CD8-positive, alpha-beta memory T cell (primary cell): ENCODE measurements at regions of chr3 and their contacts with region 1.

Region 1: GRCh38 chr3:187738331-187739093 is 6.8 kb downstream of the BCL6 start:
- DNase-seq: peak; percentile 46 to 77 (median 65)
- H3K4me3 ChIP-seq: peak overlapping the region; percentile 81
- H3K4me3 Mint-ChIP-seq: peak overlapping the region; percentile 91 to 99 (median 98)
- H3K27ac ChIP-seq: peak overlapping the region; percentile 68
- H3K27ac Mint-ChIP-seq: peak overlapping the region; percentile 82 to 100 (median 99)
- H3K4me1 ChIP-seq: peaks cover 30% of the 10 kb centered on the region
- H3K4me1 Mint-ChIP-seq: peaks cover 43 to 59% (median 56%) of the 10 kb centered on the region in 3 donors
- H3K27me3 ChIP-seq: no peaks in the 10 kb centered on the region
- H3K27me3 Mint-ChIP-seq: peaks cover 0 to 9% of the 10 kb centered on the region in 2 donors

Region 2: GRCh38 chr3:187714404-187714979 is 24.0 kb before region 1 on chr3:
- CTCF ChIA-PET with region 1: interaction called, 16 read pairs
- POLR2A ChIA-PET with region 1: no interaction called
- DNase-seq: peak; percentile 47 to 79 (median 61)
- H3K4me3 ChIP-seq: no peak overlapping the region
- H3K4me3 Mint-ChIP-seq: peak overlapping the region in 1 of 7 donors; percentile 57
- H3K27ac ChIP-seq: no peak overlapping the region
- H3K27ac Mint-ChIP-seq: peak overlapping the region in 5 of 8 donors; percentile 2 to 72 (median 10)
- H3K4me1 ChIP-seq: peaks cover 6% of the 10 kb centered on the region
- H3K4me1 Mint-ChIP-seq: peaks cover 13 to 17% (median 17%) of the 10 kb centered on the region in 3 donors
- H3K27me3 ChIP-seq: no peaks in the 10 kb centered on the region
- H3K27me3 Mint-ChIP-seq: no peaks in the 10 kb centered on the region

Region 3: DNA sequence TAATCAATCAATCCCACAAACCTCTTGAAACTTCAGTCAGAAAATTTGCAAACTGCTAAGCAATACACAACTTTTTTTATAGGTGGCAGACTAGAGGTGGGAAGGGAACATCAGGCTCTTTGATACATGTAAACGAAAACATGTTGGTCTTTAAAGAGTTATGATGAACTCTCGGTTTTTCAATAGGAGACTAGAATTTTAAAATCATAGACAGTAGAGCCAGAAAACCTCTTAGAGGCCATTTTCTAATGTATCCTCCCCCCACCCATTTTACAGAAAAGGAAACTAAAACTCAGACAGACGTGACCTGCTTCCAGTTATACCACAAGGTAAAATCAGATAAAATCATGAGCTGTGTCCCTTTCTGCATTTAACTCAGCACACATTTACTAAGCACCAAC is 236.4 kb after region 1 on chr3:
- CTCF ChIA-PET with region 1: interaction called, 39 read pairs
- POLR2A ChIA-PET with region 1: no interaction called
- DNase-seq: peak in 2 of 5 donors; percentile 20 to 46
- H3K4me3 ChIP-seq: peak overlapping the region; percentile 29
- H3K4me3 Mint-ChIP-seq: peak overlapping the region; percentile 40 to 78 (median 65)
- H3K27ac ChIP-seq: no peak overlapping the region
- H3K27ac Mint-ChIP-seq: peak overlapping the region; percentile 75 to 95 (median 92)
- H3K4me1 ChIP-seq: peaks cover 46% of the 10 kb centered on the region
- H3K4me1 Mint-ChIP-seq: peaks cover 53 to 56% (median 54%) of the 10 kb centered on the region in 3 donors
- H3K27me3 ChIP-seq: no peaks in the 10 kb centered on the region
- H3K27me3 Mint-ChIP-seq: no peaks in the 10 kb centered on the region

Region 4: GRCh38 chr3:188749010-188749617 is 1010.6 kb after region 1 on chr3:
- CTCF ChIA-PET with region 1: interaction called, 178 read pairs
- POLR2A ChIA-PET with region 1: interaction called, 9 read pairs
- DNase-seq: peak; percentile 35 to 64 (median 45)
- H3K4me3 ChIP-seq: no peak overlapping the region
- H3K4me3 Mint-ChIP-seq: no peak overlapping the region
- H3K27ac ChIP-seq: no peak overlapping the region
- H3K27ac Mint-ChIP-seq: no peak overlapping the region
- H3K4me1 ChIP-seq: no peaks in the 10 kb centered on the region
- H3K4me1 Mint-ChIP-seq: peaks cover 0 to 13% (median 3%) of the 10 kb centered on the region in 3 donors
- H3K27me3 ChIP-seq: no peaks in the 10 kb centered on the region
- H3K27me3 Mint-ChIP-seq: no peaks in the 10 kb centered on the region

Region 5: DNA sequence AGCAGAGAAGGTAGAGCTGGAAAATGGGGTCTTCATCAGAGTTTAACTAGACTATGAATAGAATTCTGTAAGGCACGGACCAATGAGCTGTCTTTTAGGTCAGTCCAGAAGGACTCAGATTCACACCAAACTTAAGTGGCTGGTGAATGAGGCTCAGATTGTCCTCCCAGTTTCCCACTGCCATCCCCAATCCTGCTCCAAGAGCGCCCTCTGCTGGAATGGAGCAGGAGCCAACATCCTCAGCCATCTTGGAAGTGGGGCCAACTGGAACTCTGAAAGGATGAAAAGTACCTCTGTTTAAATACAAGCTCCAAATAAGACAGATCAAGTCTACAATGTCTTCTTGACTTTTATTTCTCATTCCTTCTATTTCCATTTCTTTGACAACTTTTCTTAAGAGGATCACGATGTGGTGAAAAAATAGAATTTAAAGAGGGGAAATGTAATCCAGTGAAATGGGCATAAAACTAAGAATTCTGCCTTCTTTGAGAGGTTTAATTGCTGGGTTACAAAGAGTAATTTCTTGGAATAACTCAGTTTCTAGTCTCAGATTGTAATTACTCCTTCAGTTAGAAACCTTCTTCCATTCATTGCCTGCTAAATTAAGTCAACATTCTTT is 1216.2 kb after region 1 on chr3:
- CTCF ChIA-PET with region 1: interaction called, 298 read pairs
- POLR2A ChIA-PET with region 1: interaction called, 41 read pairs
- DNase-seq: peak; percentile 54 to 77 (median 56)
- H3K4me3 ChIP-seq: no peak overlapping the region
- H3K4me3 Mint-ChIP-seq: no peak overlapping the region
- H3K27ac ChIP-seq: no peak overlapping the region
- H3K27ac Mint-ChIP-seq: peak overlapping the region in 1 of 8 donors; percentile 42
- H3K4me1 ChIP-seq: no peaks in the 10 kb centered on the region
- H3K4me1 Mint-ChIP-seq: no peaks in the 10 kb centered on the region
- H3K27me3 ChIP-seq: no peaks in the 10 kb centered on the region
- H3K27me3 Mint-ChIP-seq: no peaks in the 10 kb centered on the region

Region 6: GRCh38 chr3:189123595-189124387 is 1385.3 kb after region 1 on chr3:
- CTCF ChIA-PET with region 1: interaction called, 58 read pairs
- POLR2A ChIA-PET with region 1: interaction called, 7 read pairs
- DNase-seq: no peak
- H3K4me3 ChIP-seq: peak overlapping the region; percentile 30
- H3K4me3 Mint-ChIP-seq: peak overlapping the region; percentile 81 to 95 (median 86)
- H3K27ac ChIP-seq: no peak overlapping the region
- H3K27ac Mint-ChIP-seq: peak overlapping the region; percentile 17 to 98 (median 92)
- H3K4me1 ChIP-seq: peaks cover 13% of the 10 kb centered on the region
- H3K4me1 Mint-ChIP-seq: peaks cover 39 to 72% (median 72%) of the 10 kb centered on the region in 3 donors
- H3K27me3 ChIP-seq: no peaks in the 10 kb centered on the region
- H3K27me3 Mint-ChIP-seq: peaks cover 0 to 4% of the 10 kb centered on the region in 2 donors

Region 7: DNA sequence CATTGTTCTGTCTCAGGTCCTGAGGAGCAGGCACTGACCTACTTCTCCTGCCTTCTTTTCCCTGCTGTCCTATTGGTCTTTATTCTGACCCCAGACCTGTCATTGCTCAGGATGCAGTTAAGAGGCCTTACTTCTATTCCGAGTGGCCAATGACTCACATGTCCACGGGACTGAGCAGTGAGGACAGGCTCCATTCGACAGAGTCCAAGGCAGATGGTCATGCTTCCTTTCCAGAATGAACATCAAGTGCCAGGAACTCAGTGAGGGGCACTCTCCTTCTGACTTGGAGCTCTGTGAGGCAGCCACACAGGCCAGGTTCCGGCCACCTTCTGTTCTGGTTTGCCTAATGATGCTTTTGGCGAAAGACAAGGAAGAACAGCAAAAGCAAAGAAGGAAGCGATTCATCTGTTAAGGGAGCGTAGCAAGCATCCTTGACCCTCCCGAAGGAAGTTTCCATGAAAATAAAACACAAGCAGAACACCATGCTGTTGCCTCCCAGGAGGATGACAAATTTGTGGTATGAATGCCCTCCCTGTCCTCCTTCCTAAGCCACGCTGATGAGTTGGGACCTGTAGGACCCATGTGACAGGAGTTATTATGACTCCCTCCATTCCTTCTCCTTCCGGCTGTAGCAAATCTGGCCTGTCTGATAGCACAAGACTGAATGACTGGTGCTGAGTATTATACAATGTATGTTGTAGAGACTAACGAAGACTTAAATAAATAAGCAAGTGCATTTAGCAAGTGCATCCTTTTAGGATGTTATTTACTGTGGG is 1418.9 kb after region 1 on chr3:
- CTCF ChIA-PET with region 1: interaction called, 14 read pairs
- POLR2A ChIA-PET with region 1: no interaction called
- DNase-seq: no peak
- H3K4me3 ChIP-seq: no peak overlapping the region
- H3K4me3 Mint-ChIP-seq: no peak overlapping the region
- H3K27ac ChIP-seq: no peak overlapping the region
- H3K27ac Mint-ChIP-seq: no peak overlapping the region
- H3K4me1 ChIP-seq: no peaks in the 10 kb centered on the region
- H3K4me1 Mint-ChIP-seq: peaks cover 2 to 21% (median 6%) of the 10 kb centered on the region in 3 donors
- H3K27me3 ChIP-seq: no peaks in the 10 kb centered on the region
- H3K27me3 Mint-ChIP-seq: peaks cover 0 to 5% of the 10 kb centered on the region in 2 donors